B cell (primary cell): ENCODE measurements at regions of chr12 and their contacts with region 1.

Region 1: DNA sequence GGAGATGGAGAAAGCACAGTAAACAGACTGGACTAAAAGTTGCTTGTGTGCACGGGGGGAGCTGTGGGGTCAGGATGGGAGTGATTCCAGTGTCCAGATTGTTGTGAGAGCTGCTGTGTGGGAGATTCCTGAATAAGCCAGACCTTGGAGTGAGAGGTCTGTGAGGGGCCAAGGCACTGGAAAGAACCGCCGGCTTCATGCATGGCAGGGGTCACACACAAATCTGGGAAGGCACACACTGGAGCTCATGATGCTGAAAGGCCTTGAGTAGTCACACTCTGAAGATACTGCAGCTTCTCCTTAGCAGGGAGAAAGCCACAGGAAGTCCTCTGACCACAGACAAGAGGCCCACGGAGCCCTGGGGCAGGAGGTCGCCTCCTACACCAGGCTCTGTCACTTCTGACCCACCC is 23.1 kb downstream of the ADCY6 start:
- DNase-seq: no peak
- ATAC-seq: no peak
- H3K4me3 ChIP-seq: no peak overlapping the region
- H3K4me3 Mint-ChIP-seq: no peak overlapping the region
- H3K27ac ChIP-seq: no peak overlapping the region
- H3K27ac Mint-ChIP-seq: no peak overlapping the region
- H3K4me1 ChIP-seq: peaks cover 0 to 10% of the 10 kb centered on the region in 2 donors
- H3K4me1 Mint-ChIP-seq: peaks cover 15% of the 10 kb centered on the region
- H3K27me3 ChIP-seq: peaks cover 0 to 4% (median 0%) of the 10 kb centered on the region in 4 experiments
- H3K27me3 Mint-ChIP-seq: no peaks in the 10 kb centered on the region
- CTCF ChIP-seq: no peak

Region 2: GRCh38 chr12:48572326-48572725 is 193.4 kb before region 1 on chr12:
- CTCF ChIA-PET with region 1: no interaction called
- POLR2A ChIA-PET with region 1: no interaction called
- intact Hi-C with region 1: no loop called
- DNase-seq: no peak
- ATAC-seq: no peak
- H3K4me3 ChIP-seq: no peak overlapping the region
- H3K4me3 Mint-ChIP-seq: no peak overlapping the region
- H3K27ac ChIP-seq: no peak overlapping the region
- H3K27ac Mint-ChIP-seq: no peak overlapping the region
- H3K4me1 ChIP-seq: no peaks in the 10 kb centered on the region
- H3K4me1 Mint-ChIP-seq: no peaks in the 10 kb centered on the region
- H3K27me3 ChIP-seq: peaks cover 0 to 7% (median 0%) of the 10 kb centered on the region in 4 experiments
- H3K27me3 Mint-ChIP-seq: peaks cover 27% of the 10 kb centered on the region
- CTCF ChIP-seq: no peak

Region 3: DNA sequence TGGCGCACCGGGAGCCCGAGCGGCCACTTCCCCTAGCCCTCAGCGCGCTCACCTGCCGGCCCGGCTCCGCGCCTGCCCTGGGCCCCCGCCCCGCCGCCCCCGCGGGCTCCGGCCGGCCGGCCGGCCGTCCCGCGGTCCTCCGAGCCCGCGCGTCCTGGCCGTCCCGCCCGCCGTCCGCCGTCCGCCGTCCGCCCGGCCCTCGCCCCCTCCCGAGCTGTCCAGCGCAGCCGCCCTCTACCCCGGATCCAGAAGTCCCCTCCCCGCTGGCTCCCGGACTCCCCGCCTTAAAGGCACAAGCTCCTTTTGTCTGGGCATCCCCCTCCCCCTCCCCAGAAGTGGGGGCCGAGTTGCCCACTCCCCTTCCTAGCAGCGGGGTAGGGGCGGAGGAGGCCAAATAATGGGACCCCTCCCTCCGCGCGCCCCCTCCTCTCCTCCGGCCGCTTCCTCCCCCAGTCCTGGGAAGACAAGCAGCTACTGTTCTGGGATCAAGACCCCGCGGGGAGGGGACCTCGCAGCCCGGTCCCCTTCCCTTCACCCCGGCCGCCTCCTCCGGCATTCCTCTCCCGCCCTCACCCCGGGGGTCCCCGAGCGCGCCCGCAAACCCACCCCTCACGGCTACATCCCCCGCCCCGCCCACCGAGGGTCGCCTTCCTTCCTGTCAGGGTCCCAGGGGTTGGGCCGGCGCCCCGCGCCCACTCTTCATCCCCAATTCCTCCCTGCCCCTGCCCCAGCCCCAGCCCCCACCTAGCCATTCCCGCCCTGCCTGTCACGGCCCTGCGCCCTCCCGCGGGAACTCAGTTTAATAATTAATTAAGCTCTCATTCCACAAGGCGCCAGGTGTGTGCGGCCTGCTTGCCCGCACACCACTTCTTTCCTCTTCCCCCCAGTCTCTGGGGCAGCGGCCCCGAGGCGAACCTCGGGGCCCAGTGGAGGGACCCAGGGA is 23.4 kb after region 1 on chr12 and contains the start of gene ADCY6:
- CTCF ChIA-PET with region 1: interaction called, 6 read pairs
- POLR2A ChIA-PET with region 1: interaction called, 11 read pairs
- intact Hi-C with region 1: no loop called
- DNase-seq: peak; percentile 34
- ATAC-seq: peak; percentile 14
- H3K4me3 ChIP-seq: peak within 1 kb of the TSS in 4 of 5 experiments; percentile 26 to 60 (median 47)
- H3K4me3 Mint-ChIP-seq: peak within 1 kb of the TSS; percentile 84
- H3K27ac ChIP-seq: no peak within 1 kb of the TSS
- H3K27ac Mint-ChIP-seq: no peak within 1 kb of the TSS
- H3K4me1 ChIP-seq: peaks cover 14 to 16% of the 10 kb centered on the region in 2 donors
- H3K4me1 Mint-ChIP-seq: peaks cover 18% of the 10 kb centered on the region
- H3K27me3 ChIP-seq: peaks cover 0 to 33% (median 13%) of the 10 kb centered on the region in 4 experiments
- H3K27me3 Mint-ChIP-seq: peaks cover 53% of the 10 kb centered on the region
- CTCF ChIP-seq: no peak
- total RNA-seq, gene ADCY6: not detected in 2 replicates